CD8-positive, alpha-beta T cell (primary cell): ENCODE measurements at regions of chr6 and their contacts with region 1.

Region 1: GRCh38 chr6:99613409-99613704 is 6.7 kb downstream of the PRDM13 start:
- DNase-seq: peak in 3 of 9 experiments; percentile 34 to 61 (median 56)
- ATAC-seq: peak; percentile 30
- H3K4me3 ChIP-seq: peak overlapping the region; percentile 13 to 18
- H3K4me3 Mint-ChIP-seq: no peak overlapping the region
- H3K27ac ChIP-seq: no peak overlapping the region
- H3K27ac Mint-ChIP-seq: no peak overlapping the region
- H3K4me1 ChIP-seq: peaks cover 18% of the 10 kb centered on the region
- H3K4me1 Mint-ChIP-seq: peaks cover 28% of the 10 kb centered on the region
- H3K27me3 ChIP-seq: peaks cover 52 to 54% of the 10 kb centered on the region in 2 experiments
- H3K27me3 Mint-ChIP-seq: peaks cover 81% of the 10 kb centered on the region
- CTCF ChIP-seq: no peak

Region 2: DNA sequence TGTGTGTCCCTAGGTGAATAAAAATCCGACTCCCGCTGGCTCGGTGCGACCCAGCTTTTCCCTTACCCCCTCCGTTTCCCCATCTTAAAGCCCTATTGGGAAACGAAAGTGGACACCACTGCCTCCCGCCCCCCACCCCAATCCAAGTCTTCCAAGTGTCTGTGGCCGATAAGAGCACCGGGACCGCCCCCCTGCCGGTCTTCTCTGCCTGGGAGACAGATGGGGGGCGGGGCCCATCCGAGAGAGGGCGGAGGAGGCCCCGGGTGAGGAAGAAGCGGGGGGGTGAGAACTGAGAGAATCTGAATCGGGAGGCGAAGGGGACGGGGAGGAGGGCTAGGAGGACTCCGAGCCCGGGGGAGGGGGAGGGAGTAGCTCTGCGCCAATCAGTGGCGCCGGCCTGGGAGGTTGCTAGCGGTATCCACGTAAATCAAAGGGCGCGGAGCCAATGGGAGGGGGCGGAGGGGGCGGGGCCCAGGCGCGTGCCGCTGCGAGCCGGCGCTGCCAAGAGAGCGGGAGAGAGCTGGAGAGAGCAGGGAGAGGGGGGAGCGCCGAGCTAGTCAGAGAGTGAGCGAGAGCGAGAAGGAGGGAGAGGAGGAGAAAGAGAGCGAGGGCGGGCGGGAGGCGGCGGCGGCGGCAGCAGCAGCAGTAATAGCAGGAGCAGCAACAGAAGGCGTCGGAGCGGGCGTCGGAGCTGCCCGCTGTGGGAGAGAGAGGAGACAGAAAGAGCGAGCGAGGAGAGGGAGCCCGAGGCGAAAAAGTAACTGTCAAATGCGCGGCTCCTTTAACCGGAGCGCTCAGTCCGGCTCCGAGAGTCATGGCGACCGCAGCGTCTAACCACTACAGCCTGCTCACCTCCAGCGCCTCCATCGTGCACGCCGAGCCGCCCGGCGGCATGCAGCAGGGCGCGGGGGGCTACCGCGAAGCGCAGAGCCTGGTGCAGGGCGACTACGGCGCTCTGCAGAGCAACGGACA is 779.0 kb before region 1 on chr6 and contains the start of gene POU3F2:
- CTCF ChIA-PET with region 1: no interaction called
- POLR2A ChIA-PET with region 1: no interaction called
- intact Hi-C with region 1: loop called in 1 of 2 experiments (anchors 10 kb)
- DNase-seq: peak in 8 of 9 experiments; percentile 35 to 74 (median 59)
- ATAC-seq: peak; percentile 67
- H3K4me3 ChIP-seq: peak within 1 kb of the TSS; percentile 55 to 58
- H3K4me3 Mint-ChIP-seq: peak within 1 kb of the TSS; percentile 94
- H3K27ac ChIP-seq: no peak within 1 kb of the TSS
- H3K27ac Mint-ChIP-seq: no peak within 1 kb of the TSS
- H3K4me1 ChIP-seq: peaks cover 29% of the 10 kb centered on the region
- H3K4me1 Mint-ChIP-seq: peaks cover 43% of the 10 kb centered on the region
- H3K27me3 ChIP-seq: peaks cover 44 to 61% of the 10 kb centered on the region in 2 experiments
- H3K27me3 Mint-ChIP-seq: peaks cover 65% of the 10 kb centered on the region
- CTCF ChIP-seq: no peak
- total RNA-seq, gene POU3F2: not detected

Region 3: GRCh38 chr6:98992535-98992934 is 620.8 kb before region 1 on chr6:
- CTCF ChIA-PET with region 1: no interaction called
- POLR2A ChIA-PET with region 1: no interaction called
- intact Hi-C with region 1: no loop called
- DNase-seq: no peak
- ATAC-seq: no peak
- H3K4me3 ChIP-seq: no peak overlapping the region
- H3K4me3 Mint-ChIP-seq: no peak overlapping the region
- H3K27ac ChIP-seq: no peak overlapping the region
- H3K27ac Mint-ChIP-seq: no peak overlapping the region
- H3K4me1 ChIP-seq: no peaks in the 10 kb centered on the region
- H3K4me1 Mint-ChIP-seq: no peaks in the 10 kb centered on the region
- H3K27me3 ChIP-seq: peaks cover 0 to 2% of the 10 kb centered on the region in 2 experiments
- H3K27me3 Mint-ChIP-seq: peaks cover 30% of the 10 kb centered on the region
- CTCF ChIP-seq: no peak

Region 4: GRCh38 chr6:99520855-99521632 is 92.3 kb before region 1 on chr6:
- CTCF ChIA-PET with region 1: interaction called, 3 read pairs
- POLR2A ChIA-PET with region 1: no interaction called
- intact Hi-C with region 1: loop called (anchors 5 kb)
- DNase-seq: peak; percentile 37 to 83 (median 66)
- ATAC-seq: peak; percentile 91
- H3K4me3 ChIP-seq: peak overlapping the region; percentile 79 to 94
- H3K4me3 Mint-ChIP-seq: peak overlapping the region; percentile 96
- H3K27ac ChIP-seq: peak overlapping the region; percentile 48 to 74
- H3K27ac Mint-ChIP-seq: peak overlapping the region; percentile 92
- H3K4me1 ChIP-seq: peaks cover 12% of the 10 kb centered on the region
- H3K4me1 Mint-ChIP-seq: peaks cover 41% of the 10 kb centered on the region
- H3K27me3 ChIP-seq: no peaks in the 10 kb centered on the region
- H3K27me3 Mint-ChIP-seq: no peaks in the 10 kb centered on the region
- CTCF ChIP-seq: peak; percentile 89